ENCODE measurements at regions of chr7 and their contacts with region 1.

Region 1: DNA sequence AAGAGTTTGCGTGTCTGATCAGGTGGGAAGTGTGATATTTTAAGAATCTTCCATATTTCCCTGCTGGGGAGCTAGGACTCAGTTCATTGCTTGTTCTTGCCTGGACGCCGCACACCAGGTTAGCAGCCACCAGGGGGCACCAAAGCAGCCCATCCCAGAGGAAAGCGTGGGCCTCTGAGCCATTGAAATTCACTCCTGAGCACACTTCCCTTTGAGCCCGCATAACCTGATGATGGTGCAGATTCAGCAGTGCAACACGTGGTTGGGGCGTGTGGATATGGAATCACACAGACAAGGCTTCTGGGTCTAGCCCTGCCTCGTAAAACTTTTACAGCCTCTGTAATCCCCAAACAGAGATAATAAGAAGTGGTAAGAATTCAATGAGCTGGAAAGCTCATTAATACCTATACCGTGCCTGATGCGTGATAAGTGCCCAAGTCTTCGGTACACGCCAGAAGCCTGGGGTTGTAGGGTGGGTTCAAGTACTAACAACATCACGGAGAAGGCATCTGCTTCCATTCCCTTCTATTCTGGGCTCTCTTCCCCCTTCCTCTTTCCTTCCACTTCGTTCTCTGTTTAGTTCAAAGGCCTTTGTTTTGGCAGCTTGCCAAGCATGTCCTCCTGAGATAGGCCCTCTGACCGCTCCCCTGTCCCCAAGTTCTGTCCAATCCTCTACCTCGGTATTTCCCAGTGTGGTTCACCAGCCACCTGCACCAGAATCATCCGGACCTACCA is 130.1 kb upstream of the KMT2E start:
- DNase-seq: peak; percentile 22
- H3K4me3 ChIP-seq: no peak overlapping the region
- H3K27me3 ChIP-seq: peaks cover 5% of the 10 kb centered on the region; the same call in 1 of the 2 replicates
- CTCF ChIP-seq: peak; percentile 98

Region 2: DNA sequence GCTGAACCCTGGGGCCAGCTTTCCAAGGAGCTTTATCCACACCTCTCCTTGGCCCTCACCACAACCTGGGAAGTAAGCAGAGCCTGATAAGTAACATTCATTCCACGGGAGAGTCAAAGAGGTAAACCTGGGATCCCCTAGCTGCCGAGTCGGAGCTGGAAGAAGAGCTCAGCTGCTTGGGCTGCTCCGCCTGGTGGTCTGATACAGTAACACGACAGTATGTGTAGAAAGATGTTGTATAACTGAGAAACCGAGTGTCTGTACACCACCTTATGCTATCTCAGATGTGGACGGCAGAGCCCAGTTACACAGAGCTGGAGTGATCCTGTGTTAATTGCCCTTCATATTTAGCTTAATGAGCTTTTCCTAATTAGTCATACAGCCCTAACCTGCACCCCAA is 21.2 kb before region 1 on chr7:
- CTCF ChIA-PET with region 1: interaction called, 11 read pairs
- POLR2A ChIA-PET with region 1: no interaction called
- DNase-seq: no peak
- H3K4me3 ChIP-seq: no peak overlapping the region
- H3K27me3 ChIP-seq: peaks cover 9% of the 10 kb centered on the region
- CTCF ChIP-seq: peak; percentile 41

Region 3: DNA sequence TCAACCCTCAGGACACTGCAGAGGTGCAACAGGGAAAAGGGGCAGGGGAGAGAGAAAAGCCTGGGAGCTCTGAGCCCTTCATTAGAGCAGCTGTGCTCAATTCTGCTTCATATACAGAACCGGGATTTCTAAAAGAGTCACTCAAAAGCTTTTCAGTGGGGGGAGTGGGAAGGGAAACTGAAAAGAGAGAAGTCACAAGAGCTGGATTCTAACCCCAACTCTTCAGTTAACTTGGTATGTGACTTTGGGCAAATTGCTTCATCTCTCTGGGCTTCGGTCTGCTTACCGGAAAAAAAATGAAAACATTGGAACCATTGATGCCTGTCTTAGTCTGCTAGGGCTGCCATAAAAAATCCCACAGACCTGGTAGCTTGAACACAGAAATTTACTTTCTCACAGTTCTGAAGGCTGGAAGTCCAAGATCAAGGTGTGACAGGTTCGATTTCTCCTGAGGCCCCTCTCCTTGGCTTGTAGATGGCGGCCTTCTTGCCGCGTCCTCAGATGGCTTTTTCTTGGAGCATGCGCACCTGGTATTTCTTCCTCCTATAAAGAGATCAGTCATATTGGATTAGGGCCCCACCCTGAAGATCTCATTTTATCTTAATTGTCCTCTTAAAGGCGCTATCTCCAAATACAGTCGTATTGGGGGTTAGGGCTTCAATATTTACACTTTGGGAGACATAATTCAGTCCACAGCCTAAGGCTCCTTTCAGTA is 11.8 kb after region 1 on chr7:
- CTCF ChIA-PET with region 1: interaction called, 54 read pairs
- POLR2A ChIA-PET with region 1: no interaction called
- DNase-seq: no peak
- H3K4me3 ChIP-seq: no peak overlapping the region
- H3K27me3 ChIP-seq: peaks cover 12% of the 10 kb centered on the region
- CTCF ChIP-seq: no peak

Region 4: GRCh38 chr7:104914421-104914820 is 30.5 kb after region 1 on chr7:
- CTCF ChIA-PET with region 1: interaction called, 207 read pairs
- POLR2A ChIA-PET with region 1: no interaction called
- DNase-seq: no peak
- H3K4me3 ChIP-seq: no peak overlapping the region
- H3K27me3 ChIP-seq: peaks cover 8% of the 10 kb centered on the region
- CTCF ChIP-seq: no peak

Region 5: DNA sequence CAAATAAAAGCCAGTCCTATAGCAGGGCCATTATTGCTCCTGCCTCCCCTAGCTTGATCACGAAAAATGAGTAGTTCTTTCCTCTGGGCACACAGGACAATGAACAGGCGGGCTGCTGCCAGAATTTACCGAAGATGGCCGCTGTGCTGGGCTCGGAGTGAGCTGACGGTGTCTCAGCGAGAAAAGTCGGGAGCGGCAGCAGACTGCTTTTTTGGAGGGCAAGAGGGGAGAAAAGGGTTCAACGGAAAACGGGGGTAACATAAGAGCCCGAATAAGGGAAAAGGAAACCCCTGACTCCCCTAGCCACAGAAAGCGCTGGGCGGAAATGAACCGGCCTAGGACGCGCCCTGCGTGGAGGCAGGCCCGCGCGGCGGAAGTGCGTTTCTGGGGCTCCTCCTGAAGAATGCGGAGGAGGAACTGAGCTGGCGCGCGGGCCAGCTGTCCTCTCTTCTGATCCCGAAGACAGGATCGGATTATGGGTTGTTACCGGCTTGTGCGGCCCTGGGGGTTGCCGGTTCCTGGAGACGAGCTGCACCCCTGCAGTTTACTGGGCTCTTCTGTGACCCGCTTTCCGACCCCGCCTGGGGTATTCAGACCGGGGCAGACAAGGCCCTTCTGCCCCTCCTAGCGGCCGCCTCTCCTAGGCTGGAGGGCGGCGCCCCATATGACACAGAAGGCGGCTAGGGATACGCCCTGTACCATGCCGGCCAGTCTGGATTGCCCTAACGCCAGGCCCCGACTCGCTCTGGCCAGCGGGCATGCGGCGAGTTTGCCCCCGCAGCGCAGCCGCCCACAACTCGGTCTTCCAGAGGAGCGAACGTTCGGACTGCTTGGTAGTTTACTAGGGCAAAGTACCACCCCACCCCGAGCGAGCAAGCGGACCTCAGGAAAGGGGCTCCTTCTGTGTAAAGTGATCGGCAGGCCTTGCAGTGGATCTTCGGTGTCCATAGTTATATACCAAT is 100.0 kb after region 1 on chr7:
- CTCF ChIA-PET with region 1: interaction called, 11 read pairs
- POLR2A ChIA-PET with region 1: no interaction called
- DNase-seq: peak; percentile 35
- H3K4me3 ChIP-seq: peak overlapping the region; percentile 60
- H3K27me3 ChIP-seq: no peaks in the 10 kb centered on the region
- CTCF ChIP-seq: peak; percentile 64